ENCODE measurements at regions of chr17 and their contacts with region 1.

Region 1: GRCh38 chr17:29252101-29252866 is 5.6 kb downstream of the CRYBA1 start:
- DNase-seq: peak in 1 of 3 donors; percentile 38
- H3K4me3 ChIP-seq: no peak overlapping the region
- H3K4me3 Mint-ChIP-seq: no peak overlapping the region
- H3K27ac ChIP-seq: no peak overlapping the region
- H3K27ac Mint-ChIP-seq: peak overlapping the region in 2 of 7 donors; percentile 15 to 66
- H3K4me1 ChIP-seq: peaks cover 26 to 49% of the 10 kb centered on the region in 2 donors
- H3K4me1 Mint-ChIP-seq: peaks cover 46% of the 10 kb centered on the region
- H3K27me3 ChIP-seq: no peaks in the 10 kb centered on the region
- H3K27me3 Mint-ChIP-seq: no peaks in the 10 kb centered on the region
- CTCF ChIP-seq: peak; percentile 76

Region 2: DNA sequence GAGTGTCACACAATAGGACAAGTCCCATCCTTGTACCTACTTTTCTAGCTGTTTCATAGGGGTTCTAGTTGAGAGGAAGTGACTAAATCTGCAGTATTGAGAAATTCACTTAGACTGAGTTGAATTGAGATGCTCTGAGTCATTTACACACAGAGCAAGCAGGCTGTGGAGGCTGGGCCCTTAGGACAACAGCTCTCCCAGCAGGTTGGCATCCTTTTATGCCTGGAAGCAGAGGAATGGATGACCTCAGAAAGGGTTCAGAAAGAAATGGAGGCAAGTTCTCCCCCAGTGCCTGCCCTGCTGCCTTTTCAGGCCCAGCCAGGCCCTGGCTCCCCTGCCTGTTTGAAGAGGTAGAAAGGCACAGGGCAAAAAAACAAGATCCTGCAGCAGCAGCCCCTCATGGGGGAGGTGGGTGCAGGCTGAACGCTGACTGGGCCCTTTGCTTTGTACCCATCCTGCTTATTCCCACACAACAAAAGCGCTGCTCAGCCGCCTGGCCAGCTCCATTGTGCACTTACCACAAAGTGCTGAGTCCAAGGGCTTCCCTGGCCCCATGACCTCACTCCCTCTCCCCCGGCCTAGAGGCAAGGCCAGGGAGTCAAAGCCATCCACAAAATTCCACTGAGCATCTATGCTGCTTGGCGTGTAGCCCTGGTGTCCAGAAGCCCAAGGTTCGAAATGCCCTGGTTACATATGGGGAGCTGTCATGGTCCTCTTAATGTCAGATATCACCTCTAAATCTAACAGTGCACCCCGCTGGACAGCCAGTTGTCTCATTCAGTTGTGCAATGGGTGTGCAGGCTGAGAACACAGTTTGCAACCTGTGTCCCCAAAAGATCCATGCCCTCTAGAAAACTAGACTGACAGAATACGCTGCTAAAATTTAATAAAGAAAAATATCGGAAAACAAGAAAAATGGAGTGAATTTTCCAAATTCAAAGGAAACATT is 11.0 kb before region 1 on chr17:
- intact Hi-C with region 1: loop called in 1 of 2 experiments (anchors 2 kb)
- DNase-seq: peak; percentile 84 to 96 (median 94)
- H3K4me3 ChIP-seq: no peak overlapping the region
- H3K4me3 Mint-ChIP-seq: no peak overlapping the region
- H3K27ac ChIP-seq: peak overlapping the region; percentile 67 to 79
- H3K27ac Mint-ChIP-seq: peak overlapping the region; percentile 85 to 98 (median 94)
- H3K4me1 ChIP-seq: peaks cover 51 to 59% of the 10 kb centered on the region in 2 donors
- H3K4me1 Mint-ChIP-seq: peaks cover 49% of the 10 kb centered on the region
- H3K27me3 ChIP-seq: no peaks in the 10 kb centered on the region
- H3K27me3 Mint-ChIP-seq: no peaks in the 10 kb centered on the region
- CTCF ChIP-seq: no peak